OCI-LY7 (cell line): ENCODE measurements at regions of chr13 and their contacts with region 1.

Region 1: DNA sequence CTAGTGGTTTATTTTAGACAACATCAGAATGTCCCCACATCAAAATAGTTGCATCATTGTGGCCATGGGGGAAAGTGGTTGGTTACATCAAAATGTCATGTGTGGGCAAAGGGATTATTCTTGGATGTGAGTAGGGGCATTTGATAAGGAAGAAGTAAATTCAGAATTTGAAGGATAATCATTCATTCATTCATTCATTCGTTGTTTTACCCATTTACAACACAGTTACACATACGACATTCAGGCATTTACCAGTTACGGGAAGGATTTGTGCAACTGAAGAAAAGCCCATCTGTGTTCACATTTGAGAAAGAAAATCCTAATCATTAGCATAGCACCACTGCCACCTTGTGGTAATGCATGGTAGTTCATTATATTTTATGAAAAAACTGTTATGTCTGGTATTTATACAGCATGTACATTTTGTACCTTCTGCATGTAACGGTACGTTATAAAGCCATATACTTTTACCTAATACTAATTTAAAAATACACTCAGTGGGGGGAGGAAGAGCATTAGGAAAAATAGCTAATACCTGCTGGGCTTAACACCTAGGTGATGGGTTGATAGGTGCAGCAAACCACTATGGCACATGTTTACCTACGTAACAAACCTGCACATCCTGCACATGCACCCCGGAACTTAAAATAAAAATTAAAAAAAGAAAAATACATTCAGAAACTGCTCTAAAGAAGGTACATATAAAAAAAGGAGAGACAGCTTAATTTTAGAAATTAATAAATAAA is 62.1 kb downstream of the DGKH start:
- DNase-seq: peak; percentile 69
- H3K4me3 ChIP-seq: no peak overlapping the region
- H3K27ac ChIP-seq: no peak overlapping the region
- H3K4me1 ChIP-seq: no peaks in the 10 kb centered on the region
- CTCF ChIP-seq: peak; percentile 91

Region 2: DNA sequence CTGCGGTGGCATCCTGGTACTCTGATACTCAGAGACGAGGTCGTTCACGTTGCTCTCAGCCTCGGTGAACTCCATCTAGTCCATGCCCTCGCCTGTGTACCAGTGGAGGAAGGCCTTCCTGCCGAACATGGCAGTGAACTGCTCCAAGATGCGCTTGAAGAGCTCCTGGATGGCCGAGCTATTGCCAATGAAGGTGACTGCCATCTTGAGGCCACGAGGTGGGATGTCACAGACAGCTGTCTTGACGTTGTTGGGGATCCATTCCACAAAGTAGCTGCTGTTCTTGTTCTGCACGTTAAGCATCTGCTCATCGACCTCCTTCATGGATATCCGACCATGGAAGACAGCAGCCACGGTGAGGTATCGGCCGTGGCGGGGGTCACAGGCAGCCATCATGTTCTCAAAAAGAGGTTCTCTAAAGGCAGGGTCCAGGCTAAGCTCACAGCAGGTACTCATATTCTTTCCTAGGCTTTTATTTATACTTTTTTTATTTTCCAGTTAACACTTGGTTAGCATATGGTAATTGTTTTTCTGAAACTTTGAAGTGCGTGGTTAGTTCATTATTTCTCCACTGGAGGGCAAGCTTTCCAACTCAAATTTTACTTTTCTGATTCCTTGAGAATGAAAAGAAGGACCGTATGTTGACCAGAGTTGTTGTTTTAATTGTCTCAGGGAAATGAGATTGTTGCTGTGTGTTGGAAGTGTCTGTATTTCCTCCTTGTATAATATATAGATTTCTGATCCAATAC is 725.7 kb before region 1 on chr13:
- CTCF ChIA-PET with region 1: no interaction called
- POLR2A ChIA-PET with region 1: no interaction called
- intact Hi-C with region 1: loop called (anchors 10 kb)
- DNase-seq: peak; percentile 42
- H3K4me3 ChIP-seq: no peak overlapping the region
- H3K27ac ChIP-seq: no peak overlapping the region
- H3K4me1 ChIP-seq: peaks cover 4% of the 10 kb centered on the region
- CTCF ChIP-seq: peak; percentile 82

Region 3: GRCh38 chr13:41905600-41906254 is 204.9 kb before region 1 on chr13:
- CTCF ChIA-PET with region 1: no interaction called
- POLR2A ChIA-PET with region 1: no interaction called
- intact Hi-C with region 1: loop called (anchors 2 kb)
- DNase-seq: peak; percentile 75
- H3K4me3 ChIP-seq: no peak overlapping the region
- H3K27ac ChIP-seq: no peak overlapping the region
- H3K4me1 ChIP-seq: no peaks in the 10 kb centered on the region
- CTCF ChIP-seq: peak; percentile 89

Region 4: GRCh38 chr13:42078128-42078808 is 32.3 kb before region 1 on chr13:
- CTCF ChIA-PET with region 1: no interaction called
- POLR2A ChIA-PET with region 1: no interaction called
- intact Hi-C with region 1: no loop called
- DNase-seq: peak; percentile 4
- H3K4me3 ChIP-seq: no peak overlapping the region
- H3K27ac ChIP-seq: no peak overlapping the region
- H3K4me1 ChIP-seq: no peaks in the 10 kb centered on the region
- CTCF ChIP-seq: peak; percentile 37; the same call in 1 of the 2 replicates

Region 5: GRCh38 chr13:42137856-42138537 is 27.4 kb after region 1 on chr13:
- CTCF ChIA-PET with region 1: no interaction called
- POLR2A ChIA-PET with region 1: no interaction called
- intact Hi-C with region 1: no loop called
- DNase-seq: no peak
- H3K4me3 ChIP-seq: no peak overlapping the region
- H3K27ac ChIP-seq: no peak overlapping the region
- H3K4me1 ChIP-seq: no peaks in the 10 kb centered on the region
- CTCF ChIP-seq: no peak